ENCODE measurements at regions of chr12 and their contacts with region 1.

Region 1: GRCh38 chr12:53220801-53221202 is 11.2 kb downstream of the RARG start:
- DNase-seq: peak; percentile 84 to 97
- H3K4me3 ChIP-seq: peak overlapping the region; percentile 68
- H3K27ac ChIP-seq: peak overlapping the region; percentile 96
- H3K4me1 ChIP-seq: peaks cover 79% of the 10 kb centered on the region
- H3K27me3 ChIP-seq: no peaks in the 10 kb centered on the region
- CTCF ChIP-seq: no peak

Region 2: GRCh38 chr12:53004582-53004981 is 216.2 kb before region 1 on chr12:
- CTCF ChIA-PET with region 1: no interaction called
- POLR2A ChIA-PET with region 1: no interaction called
- intact Hi-C with region 1: no loop called
- DNase-seq: no peak
- H3K4me3 ChIP-seq: peak overlapping the region; percentile 82
- H3K27ac ChIP-seq: peak overlapping the region; percentile 53
- H3K4me1 ChIP-seq: peaks cover 32% of the 10 kb centered on the region
- H3K27me3 ChIP-seq: no peaks in the 10 kb centered on the region
- CTCF ChIP-seq: no peak

Region 3: DNA sequence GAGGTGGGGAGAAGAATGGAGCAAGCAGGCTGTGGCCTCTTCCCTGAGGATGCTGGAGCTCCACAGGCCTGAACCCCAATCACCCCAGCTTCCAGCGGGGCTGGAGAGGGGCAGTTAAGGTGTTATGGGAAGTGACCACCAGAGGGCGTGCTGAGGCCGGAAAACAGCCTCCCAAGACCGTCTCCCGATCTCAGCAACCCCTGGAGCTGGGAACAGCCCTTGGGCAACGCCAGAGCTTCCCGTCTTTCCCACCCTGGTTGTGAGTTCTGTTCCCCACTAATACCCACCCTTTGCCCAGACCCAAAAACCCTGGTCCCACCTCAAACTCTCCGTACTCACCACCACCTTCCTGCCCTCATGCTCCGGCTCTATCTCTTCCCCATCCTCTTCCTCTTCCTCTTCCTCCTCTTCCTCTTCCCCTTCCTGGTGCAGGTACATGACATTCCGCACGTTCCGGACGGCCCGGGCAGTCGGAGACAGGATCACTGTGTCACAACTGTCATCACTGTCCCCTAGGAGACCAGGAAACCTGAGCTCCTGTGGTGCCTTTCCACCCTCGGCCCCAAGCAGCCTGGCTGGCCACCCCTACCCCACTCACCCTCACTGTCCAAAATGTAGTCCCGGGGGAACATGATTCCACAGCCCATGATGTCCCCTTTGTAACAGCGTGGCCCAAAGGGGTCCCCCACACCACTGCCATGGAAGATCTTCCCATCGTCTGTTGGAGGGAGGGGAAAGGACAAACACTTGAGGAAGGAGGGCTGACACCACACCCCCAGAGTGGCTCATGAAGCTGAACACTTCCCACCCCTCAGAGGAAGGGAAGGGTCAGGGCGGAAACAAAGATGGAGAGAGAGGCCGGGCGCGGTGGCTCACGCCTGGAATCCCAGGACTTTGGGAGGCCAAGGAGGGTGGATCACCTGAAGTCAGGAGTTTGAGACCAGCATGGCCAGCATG is 154.5 kb before region 1 on chr12:
- CTCF ChIA-PET with region 1: no interaction called
- POLR2A ChIA-PET with region 1: no interaction called
- intact Hi-C with region 1: no loop called
- DNase-seq: peak; percentile 53 to 74
- H3K4me3 ChIP-seq: no peak overlapping the region
- H3K27ac ChIP-seq: peak overlapping the region; percentile 50; the same call in 1 of the 2 replicates
- H3K4me1 ChIP-seq: peaks cover 25% of the 10 kb centered on the region
- H3K27me3 ChIP-seq: no peaks in the 10 kb centered on the region
- CTCF ChIP-seq: peak; percentile 91

Region 4: DNA sequence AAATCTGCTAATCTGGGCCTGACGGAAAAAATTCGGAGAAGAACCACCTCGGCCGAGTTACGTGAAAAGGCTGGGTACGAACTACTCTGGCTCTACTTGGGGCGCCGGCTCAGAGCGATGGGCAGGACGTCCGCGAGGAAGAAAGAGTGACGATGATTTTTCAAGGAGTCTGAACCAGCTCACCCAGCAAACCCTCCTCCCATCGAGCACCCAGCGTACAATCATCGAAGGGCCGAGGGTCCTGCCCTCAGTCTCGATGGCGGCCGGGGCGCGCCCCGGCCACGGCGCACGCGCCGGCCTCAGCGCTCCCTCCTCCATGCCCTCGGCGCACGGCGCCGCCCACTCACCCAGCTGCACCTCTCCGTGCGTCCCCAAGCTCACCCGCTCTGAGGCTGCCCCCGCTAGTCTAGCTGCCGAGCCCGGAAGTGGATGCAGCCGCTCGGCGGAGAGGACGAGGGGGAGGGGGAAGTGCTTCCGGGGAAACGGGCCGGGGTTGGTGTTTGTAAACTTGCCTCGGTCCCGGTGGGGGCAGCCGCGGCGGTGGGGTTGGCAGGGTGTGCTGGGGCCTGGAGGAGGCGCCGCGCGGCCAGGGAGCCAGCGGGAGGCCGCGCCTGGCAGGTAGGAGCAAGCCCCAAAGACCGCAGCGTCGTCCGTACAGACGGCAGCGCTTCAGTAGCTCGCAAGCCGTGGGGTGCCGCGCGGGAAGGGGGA is 40.4 kb before region 1 on chr12 and contains the starts of genes CSAD and ZNF740:
- CTCF ChIA-PET with region 1: interaction called, 14 read pairs
- POLR2A ChIA-PET with region 1: no interaction called
- intact Hi-C with region 1: loop called (anchors 2 kb)
- DNase-seq: peak; percentile 90 to 97
- H3K4me3 ChIP-seq: peak within 1 kb of the TSS; percentile 61
- H3K27ac ChIP-seq: peak within 1 kb of the TSS; percentile 74
- H3K4me1 ChIP-seq: peaks cover 34% of the 10 kb centered on the region
- H3K27me3 ChIP-seq: no peaks in the 10 kb centered on the region
- CTCF ChIP-seq: no peak
- total RNA-seq, gene CSAD: 33.1 and 49.0 TPM in 2 replicates
- total RNA-seq, gene ZNF740: 48.3 and 65.8 TPM in 2 replicates

Region 5: DNA sequence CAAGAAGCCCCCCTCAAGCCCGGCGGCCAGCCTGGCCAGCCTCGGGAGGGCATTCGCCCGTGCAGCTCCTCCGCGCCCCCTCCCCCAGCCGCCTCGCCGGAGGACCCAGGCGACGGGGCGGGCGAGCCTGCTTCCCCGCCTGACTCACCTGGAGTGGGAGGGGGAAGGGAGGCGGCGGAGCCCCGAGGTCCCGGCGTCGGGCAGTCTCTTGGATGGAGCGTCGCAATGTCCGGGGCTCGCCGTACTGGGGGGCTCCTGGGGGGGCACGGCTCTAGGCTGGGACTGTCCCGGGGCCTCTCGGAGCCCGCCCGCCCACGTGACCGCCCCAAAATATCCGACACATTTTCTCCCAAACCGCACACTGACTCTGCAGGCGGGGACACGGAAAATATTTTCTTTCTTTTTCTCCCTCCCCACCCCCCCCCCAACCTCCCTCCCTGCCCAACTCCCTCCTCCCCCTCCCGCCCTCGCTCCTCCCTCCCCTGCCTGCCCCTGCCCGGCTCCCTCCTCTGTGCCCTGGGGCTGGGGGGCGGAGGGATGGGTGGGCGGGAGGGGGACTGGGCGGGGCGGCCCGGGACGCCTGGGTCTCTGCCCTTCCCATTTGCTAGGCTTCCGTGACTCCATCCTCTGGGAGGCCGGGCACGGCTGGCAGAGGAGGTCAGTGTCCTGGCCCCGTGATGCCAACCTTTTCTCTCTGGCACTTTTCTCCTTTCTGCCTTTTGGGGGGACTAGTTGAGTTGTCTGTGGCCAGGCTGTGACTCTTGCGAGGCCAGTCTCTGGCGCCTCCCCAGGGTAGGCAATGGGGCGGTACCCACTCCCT is 11.2 kb after region 1 on chr12 and contains the start of gene RARG:
- CTCF ChIA-PET with region 1: no interaction called
- POLR2A ChIA-PET with region 1: interaction called, 5 read pairs
- intact Hi-C with region 1: loop called (anchors 1 kb)
- DNase-seq: peak; percentile 83 to 90
- H3K4me3 ChIP-seq: peak within 1 kb of the TSS; percentile 100
- H3K27ac ChIP-seq: peak within 1 kb of the TSS; percentile 71
- H3K4me1 ChIP-seq: peaks cover 59% of the 10 kb centered on the region
- H3K27me3 ChIP-seq: no peaks in the 10 kb centered on the region
- CTCF ChIP-seq: no peak
- total RNA-seq, gene RARG: 118 and 124 TPM in 2 replicates

Region 6: GRCh38 chr12:53267999-53268647 is 47.3 kb after region 1 on chr12 and contains the start of gene ESPL1:
- CTCF ChIA-PET with region 1: no interaction called
- POLR2A ChIA-PET with region 1: interaction called, 26 read pairs
- intact Hi-C with region 1: no loop called
- DNase-seq: peak; percentile 63 to 73
- H3K4me3 ChIP-seq: peak within 1 kb of the TSS; percentile 85
- H3K27ac ChIP-seq: no peak within 1 kb of the TSS
- H3K4me1 ChIP-seq: peaks cover 11% of the 10 kb centered on the region
- H3K27me3 ChIP-seq: no peaks in the 10 kb centered on the region
- CTCF ChIP-seq: no peak; the same call in 1 of the 2 replicates
- total RNA-seq, gene ESPL1: 37.4 and 42.0 TPM in 2 replicates

Region 7: DNA sequence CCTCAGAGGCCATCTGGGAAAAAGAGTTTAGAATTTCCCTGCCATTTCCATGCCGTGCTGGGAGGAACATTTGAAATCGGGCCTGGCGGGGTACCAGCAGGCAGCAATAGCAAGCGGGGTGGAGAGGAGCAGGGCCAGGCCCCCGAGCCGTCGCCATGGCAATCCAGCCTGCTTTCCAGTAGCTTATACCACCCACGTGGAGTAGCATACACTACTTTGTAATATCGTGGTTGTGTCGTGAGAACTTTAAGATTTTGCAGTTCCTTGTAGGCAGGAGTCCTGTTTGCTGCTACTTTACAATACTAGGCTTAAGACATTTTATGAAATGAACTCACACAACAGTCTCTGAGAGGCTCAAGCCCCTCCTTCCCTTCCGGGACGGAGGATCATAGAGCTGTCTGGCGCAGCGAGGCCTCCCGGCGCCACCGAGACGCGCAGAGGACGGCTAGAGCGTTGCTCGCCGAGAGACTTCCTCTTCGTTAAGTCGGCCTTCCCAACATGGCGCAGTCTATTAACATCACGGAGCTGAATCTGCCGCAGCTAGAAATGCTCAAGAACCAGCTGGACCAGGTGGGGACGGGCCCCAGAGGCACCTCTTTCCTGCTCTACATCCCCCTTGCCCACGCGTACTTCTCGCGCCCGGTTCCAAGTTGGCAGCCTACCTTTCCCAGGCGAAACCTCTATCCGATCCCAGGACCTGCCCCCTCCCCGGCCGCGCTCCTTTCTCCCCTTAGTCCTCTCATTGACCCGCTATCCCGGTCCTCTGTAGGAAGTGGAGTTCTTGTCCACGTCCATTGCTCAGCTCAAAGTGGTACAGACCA is 74.5 kb after region 1 on chr12 and contains the start of gene PFDN5:
- CTCF ChIA-PET with region 1: no interaction called
- POLR2A ChIA-PET with region 1: interaction called, 4 read pairs
- intact Hi-C with region 1: loop called (anchors 2 kb)
- DNase-seq: peak; percentile 71 to 83
- H3K4me3 ChIP-seq: peak within 1 kb of the TSS; percentile 98
- H3K27ac ChIP-seq: peak within 1 kb of the TSS; percentile 38
- H3K4me1 ChIP-seq: peaks cover 40% of the 10 kb centered on the region
- H3K27me3 ChIP-seq: no peaks in the 10 kb centered on the region
- CTCF ChIP-seq: no peak
- total RNA-seq, gene PFDN5: 291 and 303 TPM in 2 replicates

Measured in PC-9 (cell line).